Spleen (tissue), 13 donors: ENCODE measurements at regions of chr13 and their contacts with region 1.

Region 1: GRCh38 chr13:29508130-29508875 is 87.2 kb downstream of the SLC7A1 start:
- DNase-seq: peak; percentile 93
- H3K4me3 ChIP-seq: no peak overlapping the region
- H3K27ac ChIP-seq: no peak overlapping the region
- H3K4me1 ChIP-seq: peaks cover 0 to 20% (median 9%) of the 10 kb centered on the region in 6 donors
- H3K27me3 ChIP-seq: peaks cover 0 to 27% (median 3%) of the 10 kb centered on the region in 7 donors
- CTCF ChIP-seq: peak; percentile 75 to 98 (median 95)
- POLR2A ChIP-seq: no peak

Region 2: DNA sequence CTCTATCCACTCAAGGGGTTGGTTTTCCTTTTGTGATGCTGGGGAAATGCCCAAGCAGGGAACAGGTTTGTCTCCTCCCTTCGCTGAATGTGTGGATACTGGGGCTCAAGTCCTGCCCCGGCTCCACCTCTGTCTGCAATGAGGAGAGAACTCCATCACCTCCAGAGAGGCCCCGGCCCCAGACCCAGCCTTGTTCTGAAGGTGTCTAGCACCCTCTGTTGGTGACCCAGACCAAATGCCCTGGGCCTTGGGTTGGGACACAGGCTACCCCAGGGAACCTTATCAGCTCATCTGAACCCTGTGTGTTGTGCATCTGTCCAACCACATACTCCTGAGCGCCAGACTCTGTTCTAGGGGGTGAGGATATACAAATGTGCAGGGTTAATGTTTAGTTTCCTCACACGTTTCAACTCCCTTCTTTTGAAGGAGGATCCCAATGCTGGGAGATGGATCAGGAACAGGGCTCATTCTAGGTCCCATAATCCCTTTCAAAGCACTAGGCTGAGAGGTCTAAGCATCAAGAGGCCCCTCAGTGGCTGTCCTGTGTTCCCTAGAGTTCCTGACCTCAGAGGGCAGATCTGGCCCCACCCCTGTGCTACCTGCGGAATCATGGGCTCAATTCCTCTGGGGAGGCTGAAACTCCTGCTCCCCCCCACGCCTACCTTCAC is 199.7 kb after region 1 on chr13:
- intact Hi-C with region 1: loop called (anchors 5 kb)
- DNase-seq: no peak
- H3K4me3 ChIP-seq: no peak overlapping the region
- H3K27ac ChIP-seq: peak overlapping the region in 2 of 8 donors; percentile 21 to 30
- H3K4me1 ChIP-seq: peaks cover 0 to 8% (median 3%) of the 10 kb centered on the region in 6 donors
- H3K27me3 ChIP-seq: peaks cover 0 to 7% (median 0%) of the 10 kb centered on the region in 7 donors
- CTCF ChIP-seq: peak in 8 of 11 experiments; percentile 43 to 67 (median 56)
- POLR2A ChIP-seq: no peak

Region 3: DNA sequence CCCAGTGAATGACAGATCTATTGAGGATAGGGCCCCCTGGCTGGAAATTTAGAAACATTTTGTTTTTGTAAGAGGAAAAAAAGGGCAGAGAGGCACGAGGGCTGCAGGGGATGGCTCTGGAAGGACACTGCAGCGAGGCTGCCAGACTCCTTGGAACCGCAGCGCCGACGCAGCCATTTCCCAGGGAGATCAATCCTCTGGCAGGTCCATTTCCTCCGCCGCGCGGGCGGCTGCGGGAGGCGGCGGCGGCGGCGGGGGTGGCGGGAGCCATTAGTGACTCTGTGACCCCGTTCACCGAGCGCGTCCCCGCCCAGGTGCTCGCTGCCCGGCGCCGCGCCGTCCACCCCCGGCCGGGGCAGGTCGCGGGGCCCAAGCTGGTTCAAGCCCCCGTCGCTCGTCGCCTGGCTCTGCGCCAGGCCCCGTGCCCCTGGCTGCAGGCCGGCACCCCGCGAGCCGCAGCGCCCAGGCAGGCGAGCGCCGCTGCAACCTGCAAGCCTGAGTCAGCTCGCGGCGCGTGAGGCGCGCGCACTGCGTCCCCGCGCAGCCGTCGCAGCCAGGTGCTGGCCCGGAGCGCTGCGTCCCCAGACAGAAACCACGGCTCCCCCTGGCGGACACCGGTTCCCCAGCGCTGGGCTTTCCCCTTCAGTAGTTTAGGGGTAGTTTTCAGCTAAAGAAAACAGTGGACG is 606.4 kb after region 1 on chr13:
- intact Hi-C with region 1: loop called (anchors 5 kb)
- DNase-seq: peak; percentile 98
- H3K4me3 ChIP-seq: peak overlapping the region; percentile 42 to 83 (median 69)
- H3K27ac ChIP-seq: peak overlapping the region in 4 of 8 donors; percentile 35 to 69 (median 59)
- H3K4me1 ChIP-seq: peaks cover 0 to 43% (median 28%) of the 10 kb centered on the region in 6 donors
- H3K27me3 ChIP-seq: peaks cover 0 to 16% (median 0%) of the 10 kb centered on the region in 7 donors
- CTCF ChIP-seq: peak; percentile 79 to 94 (median 91)
- POLR2A ChIP-seq: no peak